CD8-positive, alpha-beta T cell (primary cell): ENCODE measurements at regions of chr3 and their contacts with region 1.

Region 1: GRCh38 chr3:153026026-153026425 is 136.0 kb upstream of the RAP2B start:
- DNase-seq: peak in 2 of 9 experiments; percentile 42 to 56
- ATAC-seq: no peak
- H3K4me3 ChIP-seq: no peak overlapping the region
- H3K4me3 Mint-ChIP-seq: no peak overlapping the region
- H3K27ac ChIP-seq: no peak overlapping the region
- H3K27ac Mint-ChIP-seq: no peak overlapping the region
- H3K4me1 ChIP-seq: no peaks in the 10 kb centered on the region
- H3K4me1 Mint-ChIP-seq: no peaks in the 10 kb centered on the region
- H3K27me3 ChIP-seq: no peaks in the 10 kb centered on the region
- H3K27me3 Mint-ChIP-seq: peaks cover 16% of the 10 kb centered on the region
- CTCF ChIP-seq: peak; percentile 79

Region 2: DNA sequence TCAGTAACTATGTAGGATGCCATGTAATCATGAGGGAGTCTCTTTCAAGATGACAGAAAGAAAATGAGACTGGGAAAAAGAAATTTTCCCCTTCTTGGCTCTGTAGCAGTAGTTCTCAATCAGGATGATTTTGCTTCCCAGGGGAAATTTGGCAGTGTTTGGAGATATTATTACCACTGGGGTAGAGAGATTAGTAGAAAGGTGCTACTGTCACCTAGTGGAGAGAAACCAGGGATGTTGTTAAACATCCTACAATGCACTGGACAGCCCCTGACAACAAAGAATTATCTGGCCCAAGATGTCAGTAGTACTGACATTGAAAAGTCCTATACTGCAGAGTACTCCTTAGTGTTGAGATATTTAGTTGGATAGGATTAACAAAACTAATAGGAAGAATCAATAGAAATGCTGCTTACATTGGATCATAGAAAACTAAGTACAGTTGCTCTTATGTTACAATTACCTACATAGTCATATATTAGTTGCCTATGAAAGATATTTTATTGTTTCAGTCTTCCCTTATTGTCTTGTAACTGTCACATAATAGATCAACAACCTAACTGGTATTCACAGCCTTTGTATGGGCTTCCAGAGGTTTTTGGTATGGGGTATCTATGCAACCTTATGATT is 569.3 kb after region 1 on chr3:
- CTCF ChIA-PET with region 1: no interaction called
- POLR2A ChIA-PET with region 1: no interaction called
- intact Hi-C with region 1: loop called (anchors 5 kb)
- DNase-seq: peak in 2 of 9 experiments; percentile 38 to 49
- ATAC-seq: no peak
- H3K4me3 ChIP-seq: no peak overlapping the region
- H3K4me3 Mint-ChIP-seq: no peak overlapping the region
- H3K27ac ChIP-seq: no peak overlapping the region
- H3K27ac Mint-ChIP-seq: no peak overlapping the region
- H3K4me1 ChIP-seq: no peaks in the 10 kb centered on the region
- H3K4me1 Mint-ChIP-seq: peaks cover 6% of the 10 kb centered on the region
- H3K27me3 ChIP-seq: no peaks in the 10 kb centered on the region
- H3K27me3 Mint-ChIP-seq: no peaks in the 10 kb centered on the region
- CTCF ChIP-seq: peak; percentile 48

Region 3: GRCh38 chr3:153970741-153971347 is 944.8 kb after region 1 on chr3:
- CTCF ChIA-PET with region 1: no interaction called
- POLR2A ChIA-PET with region 1: no interaction called
- intact Hi-C with region 1: loop called in 1 of 2 experiments (anchors 5 kb)
- DNase-seq: peak in 1 of 9 experiments; percentile 3
- ATAC-seq: no peak
- H3K4me3 ChIP-seq: no peak overlapping the region
- H3K4me3 Mint-ChIP-seq: no peak overlapping the region
- H3K27ac ChIP-seq: no peak overlapping the region
- H3K27ac Mint-ChIP-seq: no peak overlapping the region
- H3K4me1 ChIP-seq: no peaks in the 10 kb centered on the region
- H3K4me1 Mint-ChIP-seq: no peaks in the 10 kb centered on the region
- H3K27me3 ChIP-seq: no peaks in the 10 kb centered on the region
- H3K27me3 Mint-ChIP-seq: peaks cover 16% of the 10 kb centered on the region
- CTCF ChIP-seq: no peak

Region 4: DNA sequence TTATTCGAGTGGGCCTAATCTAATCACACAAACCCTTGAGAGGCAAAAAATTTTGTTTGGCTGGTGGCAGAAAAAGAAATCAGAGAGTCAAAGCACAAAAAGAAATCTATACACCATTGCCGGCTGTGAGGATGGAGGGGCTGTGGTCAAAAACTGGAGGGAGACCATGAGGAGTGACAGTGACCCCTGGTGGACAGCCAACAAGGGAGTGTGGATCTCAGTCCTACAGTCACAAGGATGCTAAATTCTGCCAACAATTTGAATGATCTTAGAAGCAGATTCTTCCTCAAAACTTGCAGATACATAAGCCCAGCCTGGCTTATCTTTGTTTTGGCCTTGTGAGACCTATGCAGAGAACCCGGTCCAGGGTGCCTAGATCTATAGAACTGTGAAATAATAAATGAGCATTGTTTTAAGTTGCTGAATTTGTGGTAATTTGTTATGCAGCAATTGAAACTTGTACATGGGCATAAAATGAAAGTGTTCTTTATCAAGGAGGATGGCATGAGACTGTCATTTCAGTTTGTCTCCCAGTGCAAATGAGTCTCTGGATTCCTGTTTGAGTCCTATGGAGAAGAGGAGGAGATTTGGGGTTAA is 992.2 kb after region 1 on chr3:
- CTCF ChIA-PET with region 1: interaction called, 6 read pairs
- POLR2A ChIA-PET with region 1: no interaction called
- intact Hi-C with region 1: loop called in 1 of 2 experiments (anchors 5 kb)
- DNase-seq: peak in 7 of 9 experiments; percentile 1 to 38 (median 26)
- ATAC-seq: no peak
- H3K4me3 ChIP-seq: no peak overlapping the region
- H3K4me3 Mint-ChIP-seq: no peak overlapping the region
- H3K27ac ChIP-seq: no peak overlapping the region
- H3K27ac Mint-ChIP-seq: no peak overlapping the region
- H3K4me1 ChIP-seq: no peaks in the 10 kb centered on the region
- H3K4me1 Mint-ChIP-seq: no peaks in the 10 kb centered on the region
- H3K27me3 ChIP-seq: no peaks in the 10 kb centered on the region
- H3K27me3 Mint-ChIP-seq: peaks cover 5% of the 10 kb centered on the region
- CTCF ChIP-seq: no peak

Region 5: DNA sequence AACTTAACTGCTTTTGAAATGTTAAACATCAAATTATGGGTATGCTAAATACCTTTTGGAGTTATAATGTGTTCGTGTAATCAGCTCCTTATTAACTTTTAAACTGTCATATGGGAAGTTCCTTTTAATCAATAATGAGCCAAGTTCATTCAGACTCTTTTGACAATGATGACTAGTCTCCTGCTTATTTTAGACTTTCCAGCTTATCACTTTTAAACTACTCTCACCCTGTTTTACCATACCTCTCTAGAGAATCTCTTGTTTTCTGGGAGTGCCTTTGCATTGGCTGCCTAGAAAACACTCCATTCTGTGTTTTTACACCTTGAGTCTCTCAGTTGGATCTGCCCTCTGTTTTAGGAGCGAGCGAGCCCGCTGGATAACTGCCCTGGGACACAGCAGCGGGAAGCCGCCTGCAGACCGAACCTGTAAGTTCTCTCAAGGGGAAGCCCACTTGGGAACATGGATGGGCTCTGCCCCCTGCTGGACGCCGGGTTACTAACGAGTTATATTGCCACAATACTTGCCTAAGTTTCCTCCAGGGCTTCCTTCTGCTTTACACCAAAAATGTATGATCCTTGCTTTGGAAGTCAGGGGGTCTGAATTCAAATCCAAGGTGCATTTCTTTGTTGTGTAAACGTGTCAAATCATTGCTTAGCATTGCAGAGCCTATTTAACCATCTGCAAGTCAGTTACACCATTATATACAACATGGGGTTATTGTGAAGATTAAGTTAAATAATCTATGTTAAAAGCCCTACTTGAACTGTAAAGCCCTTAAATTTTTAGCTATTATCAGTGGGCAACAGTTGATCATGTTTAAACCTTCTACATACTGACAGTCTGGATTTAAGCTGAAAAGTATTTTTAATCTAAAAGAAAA is 1227.0 kb after region 1 on chr3:
- CTCF ChIA-PET with region 1: interaction called, 3 read pairs
- POLR2A ChIA-PET with region 1: no interaction called
- intact Hi-C with region 1: loop called (anchors 2 kb)
- DNase-seq: peak; percentile 35 to 70 (median 60)
- ATAC-seq: no peak
- H3K4me3 ChIP-seq: no peak overlapping the region
- H3K4me3 Mint-ChIP-seq: no peak overlapping the region
- H3K27ac ChIP-seq: no peak overlapping the region
- H3K27ac Mint-ChIP-seq: no peak overlapping the region
- H3K4me1 ChIP-seq: no peaks in the 10 kb centered on the region
- H3K4me1 Mint-ChIP-seq: peaks cover 2% of the 10 kb centered on the region
- H3K27me3 ChIP-seq: no peaks in the 10 kb centered on the region
- H3K27me3 Mint-ChIP-seq: no peaks in the 10 kb centered on the region
- CTCF ChIP-seq: peak; percentile 60